ENCODE measurements at regions of chr10 and their contacts with region 1.

Region 1: GRCh38 chr10:70549962-70550458 is 52.5 kb downstream of the PRF1 start:
- DNase-seq: peak in 9 of 10 donors; percentile 26 to 95 (median 78)

Region 2: DNA sequence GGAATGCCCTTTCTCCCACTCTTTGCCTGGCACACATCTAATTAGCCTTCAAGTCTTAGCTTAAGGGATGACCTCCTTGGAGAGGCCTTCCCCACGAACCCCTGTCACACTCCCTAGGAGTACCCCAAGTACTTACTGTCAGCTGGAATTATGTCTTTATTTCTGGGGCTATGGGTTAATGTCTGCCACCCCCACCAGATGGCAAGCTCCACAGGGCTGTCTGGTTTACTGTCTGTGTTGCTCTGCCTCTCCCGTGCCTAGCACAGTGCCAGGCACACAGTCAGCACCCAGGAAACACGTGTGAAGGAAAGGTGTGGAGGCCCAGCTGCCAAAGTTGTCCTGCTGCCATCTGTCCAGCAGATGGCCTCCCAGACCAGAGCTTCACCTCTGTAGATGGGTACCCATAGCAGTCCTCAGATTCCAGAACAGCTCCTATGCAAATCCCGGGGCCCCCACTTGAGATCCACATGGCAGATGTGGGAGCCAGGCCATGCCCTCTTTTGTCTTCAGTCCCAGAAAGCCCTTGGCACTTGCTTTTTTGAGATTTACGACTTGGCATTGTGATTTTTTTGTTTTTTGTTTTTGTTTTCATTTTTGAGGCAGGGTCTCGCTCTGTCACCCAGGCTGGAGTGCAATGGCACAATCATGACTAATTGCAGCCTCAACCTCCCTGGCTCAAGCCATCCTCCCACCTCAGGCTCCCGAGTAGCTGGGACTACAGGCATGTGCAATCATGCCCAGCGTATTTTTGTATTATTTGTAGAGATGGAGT is 88.6 kb before region 1 on chr10:
- intact Hi-C with region 1: loop called (anchors 5 kb)
- DNase-seq: peak in 8 of 10 donors; percentile 22 to 92 (median 58)

Region 3: DNA sequence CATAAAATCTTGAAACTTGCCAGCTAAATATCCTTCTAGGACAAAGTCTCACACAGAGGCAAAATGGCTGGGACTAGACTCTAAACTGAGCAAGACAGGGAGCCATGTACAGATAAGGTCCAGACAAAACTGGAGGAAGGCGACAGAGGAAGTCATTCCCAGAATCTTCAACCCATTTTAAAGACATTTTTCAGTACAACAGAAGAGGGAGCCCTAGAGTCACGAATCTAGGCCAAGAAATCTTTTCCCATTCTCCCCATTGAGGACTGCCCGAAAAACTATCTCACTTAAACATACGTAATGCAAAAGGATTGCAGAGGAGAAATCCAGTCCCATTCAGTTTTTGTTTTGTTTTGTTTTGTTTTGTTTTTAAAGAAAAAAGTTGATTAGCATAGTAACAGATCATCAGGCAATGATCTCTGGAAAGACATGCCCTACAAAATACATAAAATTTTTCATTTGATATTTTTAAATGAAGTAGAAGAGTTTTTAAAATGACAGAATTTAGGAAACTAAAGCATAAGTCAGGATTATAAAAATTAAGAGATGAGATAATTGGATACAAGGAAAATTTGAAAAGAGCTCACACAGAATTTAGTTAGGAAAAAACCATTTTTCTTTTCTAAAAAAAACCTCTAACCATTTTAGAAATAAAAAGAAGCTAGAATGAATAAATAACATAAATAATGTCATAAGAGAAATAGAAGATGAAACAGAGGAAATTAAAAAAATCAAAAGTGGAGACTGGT is 69.4 kb after region 1 on chr10:
- intact Hi-C with region 1: loop called (anchors 10 kb)
- DNase-seq: no peak

Region 4: DNA sequence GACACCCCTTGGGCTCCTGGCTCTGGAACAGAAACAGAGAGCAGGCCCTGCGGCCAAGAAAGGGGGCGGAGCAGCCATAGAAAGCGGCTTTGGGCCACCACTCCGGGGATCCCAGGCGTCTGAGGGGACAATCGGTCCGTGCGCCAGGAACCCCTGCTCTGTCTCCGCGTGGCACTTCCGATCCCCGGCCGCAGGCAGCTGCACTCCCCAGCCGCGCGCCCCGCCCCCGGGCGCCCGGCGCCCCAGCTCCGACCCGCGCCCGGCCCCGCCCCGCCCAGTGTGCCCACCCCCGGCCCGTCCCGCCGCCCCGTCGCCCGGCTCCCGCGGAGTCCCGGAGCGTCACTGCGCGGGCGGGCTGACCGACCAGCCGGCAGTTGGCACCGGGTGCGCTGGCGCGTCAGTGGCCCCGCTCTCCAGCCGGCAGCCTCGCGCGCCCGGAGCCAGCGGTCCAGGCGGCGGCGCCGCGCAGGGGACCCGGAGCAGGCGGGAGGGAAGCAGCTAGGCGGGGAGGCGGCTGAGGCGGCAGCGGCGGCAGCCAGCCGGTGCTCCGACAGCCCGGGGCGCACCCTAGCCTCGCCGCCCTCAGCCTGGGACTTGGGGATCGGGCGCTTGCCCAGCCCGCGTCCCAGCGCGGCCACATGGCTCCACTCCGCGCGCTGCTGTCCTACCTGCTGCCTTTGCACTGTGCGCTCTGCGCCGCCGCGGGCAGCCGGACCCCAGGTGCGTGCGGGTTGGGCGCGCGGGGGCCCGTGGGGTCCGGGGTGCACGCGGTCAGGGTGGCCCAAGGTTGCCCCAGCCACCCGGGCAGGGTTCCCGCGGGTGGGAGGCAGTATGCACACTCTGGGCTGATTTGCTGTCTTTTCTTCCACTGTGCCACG is 122.4 kb after region 1 on chr10 and contains the start of gene ADAMTS14:
- intact Hi-C with region 1: loop called (anchors 10 kb)
- DNase-seq: peak in 9 of 10 donors; percentile 47 to 96 (median 65)

Region 5: DNA sequence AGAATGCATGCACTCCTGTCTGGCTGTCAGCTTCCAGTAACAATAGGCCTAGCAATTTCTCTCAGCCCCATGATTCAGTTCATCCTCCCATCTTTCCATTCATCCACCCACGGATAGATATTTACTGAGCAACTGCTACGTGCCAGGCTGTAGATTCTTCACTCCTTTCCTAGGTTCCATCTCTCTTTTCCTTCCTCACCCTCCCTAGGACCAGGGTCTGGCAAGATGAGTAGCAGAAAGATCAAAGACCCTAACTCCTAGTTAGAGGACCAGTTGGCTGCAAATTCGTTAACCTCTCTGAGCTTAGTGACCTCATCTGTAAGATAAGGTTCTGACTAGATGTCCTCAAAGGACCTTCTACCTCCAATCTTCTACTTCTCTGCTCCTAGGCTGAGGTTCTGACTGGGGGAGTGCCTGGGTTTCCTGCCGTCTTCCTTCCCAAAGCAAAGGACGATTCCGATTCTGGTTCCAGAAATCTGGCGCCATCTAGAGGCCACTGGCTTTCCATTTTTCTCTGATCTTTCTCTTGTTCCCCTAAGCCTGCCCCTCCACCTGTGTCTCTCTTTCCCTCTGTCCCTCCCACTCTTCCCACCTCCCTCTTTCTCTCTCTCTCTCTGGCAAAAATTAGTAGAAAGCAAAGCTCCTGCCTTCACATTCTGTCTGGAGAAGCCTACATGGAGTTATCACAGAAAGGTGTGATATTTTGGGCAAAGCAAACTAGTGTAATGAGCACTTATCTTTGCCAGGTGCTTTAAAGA is 208.9 kb after region 1 on chr10:
- intact Hi-C with region 1: loop called (anchors 1 kb)
- DNase-seq: peak; percentile 33 to 95 (median 82)

Region 6: DNA sequence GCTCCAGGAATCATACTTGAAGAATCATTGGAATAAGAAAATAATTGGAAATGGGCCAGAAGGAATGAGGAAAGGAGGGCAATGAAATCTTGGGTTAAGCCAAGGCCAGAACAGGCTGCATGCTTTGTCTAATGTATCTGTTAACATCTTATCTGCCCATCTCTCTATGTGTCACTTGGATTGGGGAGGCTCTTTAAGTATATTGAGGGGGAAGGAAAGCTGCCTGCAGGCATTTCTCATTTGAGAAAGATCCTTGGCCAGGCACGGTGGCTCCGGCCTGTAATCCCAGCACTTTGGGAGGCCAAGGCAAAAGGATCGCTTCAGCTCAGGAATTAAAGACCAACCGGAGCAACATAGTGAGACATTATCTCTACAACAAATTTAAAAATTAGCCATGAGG is 324.0 kb after region 1 on chr10:
- intact Hi-C with region 1: loop called (anchors 5 kb)
- DNase-seq: no peak

Region 7: DNA sequence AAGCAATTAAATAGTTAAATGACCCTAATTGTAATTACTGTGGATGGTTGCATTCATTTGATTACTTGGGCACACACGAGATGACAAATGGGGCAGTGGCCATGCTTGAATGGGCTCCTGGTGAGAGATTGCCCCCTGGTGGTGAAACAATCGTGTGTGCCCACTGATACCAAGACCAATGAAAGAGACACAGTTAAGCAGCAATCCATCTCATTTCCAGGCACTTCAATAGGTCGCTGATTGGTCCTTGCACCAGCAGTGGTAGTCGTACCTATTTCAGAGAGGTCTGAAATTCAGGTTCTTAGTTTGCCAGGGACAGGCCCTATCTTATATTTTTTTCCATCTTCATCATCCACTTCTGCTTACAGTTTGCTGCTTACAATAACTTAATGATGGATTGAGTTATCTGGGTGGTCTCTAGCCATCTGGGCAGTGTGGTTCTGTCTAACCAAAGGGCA is 330.1 kb after region 1 on chr10:
- intact Hi-C with region 1: loop called (anchors 1 kb)
- DNase-seq: peak; percentile 60 to 97 (median 84)